GM10248 (cell line): ENCODE measurements at regions of chr19 and their contacts with region 1.

Region 1: GRCh38 chr19:46753420-46754155 is 7.3 kb upstream of the STRN4 start:
- DNase-seq: peak; percentile 78
- CTCF ChIP-seq: peak; percentile 77

Region 2: GRCh38 chr19:46691104-46691503 is 62.5 kb before region 1 on chr19:
- CTCF ChIA-PET with region 1: no interaction called
- POLR2A ChIA-PET with region 1: no interaction called
- DNase-seq: no peak
- CTCF ChIP-seq: no peak

Region 3: GRCh38 chr19:46766569-46767317 is 13.2 kb after region 1 on chr19:
- CTCF ChIA-PET with region 1: interaction called, 31 read pairs
- POLR2A ChIA-PET with region 1: no interaction called
- DNase-seq: peak; percentile 78
- CTCF ChIP-seq: peak; percentile 69